ENCODE measurements at regions of chr6 and their contacts with region 1.

Region 1: DNA sequence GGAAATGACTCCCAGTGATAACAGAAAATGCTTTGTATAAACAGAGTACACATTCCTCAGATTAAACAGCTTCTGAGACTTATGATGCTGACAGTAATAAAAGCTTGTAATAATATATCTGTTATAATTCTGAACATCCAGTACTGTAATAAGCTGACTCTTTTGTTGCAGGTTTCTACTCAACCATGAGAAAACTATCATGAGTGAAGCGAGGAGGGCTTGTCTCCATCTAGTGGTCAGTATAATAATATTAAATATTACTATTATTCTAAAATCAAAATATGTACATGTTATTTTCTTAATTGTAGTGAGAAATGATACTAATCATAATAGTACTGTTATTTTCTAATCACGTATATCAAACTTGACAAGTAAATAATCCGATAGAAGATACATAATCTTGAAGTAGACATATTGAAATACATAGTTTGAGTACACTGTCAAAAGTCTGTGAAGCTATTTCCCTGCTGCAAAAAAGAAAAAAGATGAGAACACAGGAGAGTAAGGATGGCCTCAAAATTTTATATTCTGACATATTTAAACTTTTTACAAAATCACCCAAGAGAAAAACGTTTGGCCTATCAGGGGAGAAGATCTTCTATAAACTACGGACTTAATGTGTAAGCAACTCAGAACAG is 183.1 kb downstream of the MOXD1 start:
- DNase-seq: no peak
- ATAC-seq: no peak
- H3K4me3 ChIP-seq: no peak overlapping the region
- H3K27ac ChIP-seq: no peak overlapping the region
- H3K4me1 ChIP-seq: no peaks in the 10 kb centered on the region
- H3K27me3 ChIP-seq: no peaks in the 10 kb centered on the region
- CTCF ChIP-seq: peak in 4 of 5 experiments; percentile 31 to 49 (median 41)
- POLR2A ChIP-seq: no peak

Region 2: DNA sequence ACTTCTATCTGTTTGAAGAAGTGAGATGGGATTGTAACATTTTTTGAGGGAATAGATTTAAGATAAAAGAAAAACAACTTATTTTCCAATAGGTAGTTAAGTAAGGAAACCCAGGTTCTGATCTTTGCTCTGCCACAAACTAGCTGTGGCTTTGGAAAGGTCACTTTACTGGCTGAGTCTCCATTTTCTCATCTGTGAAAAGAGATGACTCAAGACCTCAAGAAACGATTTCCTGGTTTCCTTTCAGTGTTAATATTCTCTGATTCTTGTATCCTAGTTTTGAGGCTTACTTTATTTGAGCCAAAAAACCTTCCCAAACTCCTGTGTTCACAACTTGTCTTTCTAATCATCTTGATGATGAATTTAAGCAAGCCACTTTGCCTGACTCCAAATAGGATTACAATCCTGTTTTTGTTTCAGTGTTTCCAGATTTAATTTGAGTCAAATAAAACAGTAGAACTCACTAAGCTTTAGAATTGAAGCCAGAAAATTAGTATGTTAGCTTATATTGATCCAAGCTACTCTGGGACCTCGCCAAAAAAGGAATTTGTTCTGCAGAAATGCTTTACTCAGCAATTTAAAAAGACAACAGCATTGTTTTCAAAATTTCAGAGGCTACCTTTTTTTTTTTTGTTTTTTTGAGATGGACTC is 359.3 kb before region 1 on chr6:
- in situ Hi-C with region 1: no loop called
- intact Hi-C with region 1: no loop called
- DNase-seq: no peak
- ATAC-seq: no peak
- H3K4me3 ChIP-seq: no peak overlapping the region
- H3K27ac ChIP-seq: no peak overlapping the region
- H3K4me1 ChIP-seq: no peaks in the 10 kb centered on the region
- H3K27me3 ChIP-seq: no peaks in the 10 kb centered on the region
- CTCF ChIP-seq: no peak
- POLR2A ChIP-seq: no peak

Region 3: DNA sequence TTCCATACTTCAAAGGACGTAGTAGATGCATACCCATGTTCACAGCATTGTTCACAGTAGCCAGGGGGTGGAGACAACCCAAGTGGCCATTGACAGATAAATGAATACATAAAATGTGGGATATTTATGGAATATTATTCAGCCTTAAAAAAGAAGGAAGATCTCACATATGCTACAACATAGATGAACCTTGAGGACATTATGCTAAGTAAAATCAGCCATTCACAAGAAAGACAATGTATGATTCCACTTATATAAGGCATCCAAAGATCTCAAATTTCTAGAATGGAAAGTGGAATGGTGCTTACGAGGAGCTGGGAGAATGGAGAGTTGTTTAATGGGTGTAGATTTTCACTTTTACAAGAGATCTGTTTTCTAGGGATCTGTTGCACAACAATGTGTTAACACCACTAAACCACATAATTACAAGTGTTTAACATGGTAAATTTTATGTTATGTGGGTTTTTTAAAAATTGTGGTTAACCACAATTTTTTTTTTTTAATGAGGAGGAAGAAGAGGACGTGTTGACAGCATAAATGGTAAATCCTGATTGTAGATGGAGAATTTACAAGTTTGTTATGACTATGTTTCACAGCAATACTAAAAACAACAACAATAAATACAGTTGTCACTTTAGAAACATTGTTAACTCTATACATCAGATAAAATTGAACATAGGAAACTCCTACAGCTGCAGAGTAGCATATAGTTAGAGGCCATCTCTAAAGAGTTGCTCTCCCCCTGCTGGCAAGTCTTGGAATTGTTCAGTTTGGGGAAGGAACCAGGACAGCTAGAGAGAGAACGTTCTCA is 308.6 kb before region 1 on chr6:
- in situ Hi-C with region 1: loop called in 1 of 4 experiments (anchors 25 kb)
- intact Hi-C with region 1: no loop called
- DNase-seq: peak; percentile 19 to 42
- ATAC-seq: peak; percentile 69 to 76
- H3K4me3 ChIP-seq: no peak overlapping the region
- H3K27ac ChIP-seq: no peak overlapping the region
- H3K4me1 ChIP-seq: no peaks in the 10 kb centered on the region
- H3K27me3 ChIP-seq: no peaks in the 10 kb centered on the region
- CTCF ChIP-seq: peak; percentile 55 to 81 (median 63)
- POLR2A ChIP-seq: no peak

Region 4: GRCh38 chr6:131923356-131923755 is 294.8 kb before region 1 on chr6:
- in situ Hi-C with region 1: loop called (anchors 5 to 25 kb)
- intact Hi-C with region 1: loop called (anchors 2 kb)
- DNase-seq: no peak
- ATAC-seq: no peak
- H3K4me3 ChIP-seq: no peak overlapping the region
- H3K27ac ChIP-seq: no peak overlapping the region
- H3K4me1 ChIP-seq: no peaks in the 10 kb centered on the region
- H3K27me3 ChIP-seq: no peaks in the 10 kb centered on the region
- CTCF ChIP-seq: peak in 3 of 5 experiments; percentile 19 to 42 (median 33)
- POLR2A ChIP-seq: no peak

Region 5: GRCh38 chr6:132456700-132457143 is 238.5 kb after region 1 on chr6:
- in situ Hi-C with region 1: no loop called
- intact Hi-C with region 1: no loop called
- DNase-seq: peak in 1 of 2 donors; percentile 15
- ATAC-seq: peak in 1 of 2 donors; percentile 47
- H3K4me3 ChIP-seq: no peak overlapping the region
- H3K27ac ChIP-seq: no peak overlapping the region
- H3K4me1 ChIP-seq: no peaks in the 10 kb centered on the region
- H3K27me3 ChIP-seq: no peaks in the 10 kb centered on the region
- CTCF ChIP-seq: no peak
- POLR2A ChIP-seq: no peak

Region 6: GRCh38 chr6:133159255-133159795 is 941.1 kb after region 1 on chr6:
- in situ Hi-C with region 1: no loop called
- intact Hi-C with region 1: no loop called
- DNase-seq: no peak
- ATAC-seq: no peak
- H3K4me3 ChIP-seq: no peak overlapping the region
- H3K27ac ChIP-seq: no peak overlapping the region
- H3K4me1 ChIP-seq: no peaks in the 10 kb centered on the region
- H3K27me3 ChIP-seq: no peaks in the 10 kb centered on the region
- CTCF ChIP-seq: no peak
- POLR2A ChIP-seq: no peak

Measured in gastrocnemius medialis (tissue), 4 donors.